ENCODE measurements at regions of chr19 and their contacts with region 1.

Region 1: GRCh38 chr19:15432629-15433518 is 14.1 kb upstream of the AKAP8L start:
- DNase-seq: peak; percentile 93
- ATAC-seq: peak; percentile 93
- H3K4me3 ChIP-seq: peak overlapping the region; percentile 71 to 93 (median 87)
- H3K4me3 Mint-ChIP-seq: peak overlapping the region; percentile 99
- H3K27ac ChIP-seq: peak overlapping the region; percentile 52 to 70
- H3K27ac Mint-ChIP-seq: peak overlapping the region; percentile 95
- H3K4me1 ChIP-seq: peaks cover 24 to 32% of the 10 kb centered on the region in 2 donors
- H3K4me1 Mint-ChIP-seq: peaks cover 27% of the 10 kb centered on the region
- H3K27me3 ChIP-seq: no peaks in the 10 kb centered on the region
- H3K27me3 Mint-ChIP-seq: no peaks in the 10 kb centered on the region
- CTCF ChIP-seq: no peak

Region 2: DNA sequence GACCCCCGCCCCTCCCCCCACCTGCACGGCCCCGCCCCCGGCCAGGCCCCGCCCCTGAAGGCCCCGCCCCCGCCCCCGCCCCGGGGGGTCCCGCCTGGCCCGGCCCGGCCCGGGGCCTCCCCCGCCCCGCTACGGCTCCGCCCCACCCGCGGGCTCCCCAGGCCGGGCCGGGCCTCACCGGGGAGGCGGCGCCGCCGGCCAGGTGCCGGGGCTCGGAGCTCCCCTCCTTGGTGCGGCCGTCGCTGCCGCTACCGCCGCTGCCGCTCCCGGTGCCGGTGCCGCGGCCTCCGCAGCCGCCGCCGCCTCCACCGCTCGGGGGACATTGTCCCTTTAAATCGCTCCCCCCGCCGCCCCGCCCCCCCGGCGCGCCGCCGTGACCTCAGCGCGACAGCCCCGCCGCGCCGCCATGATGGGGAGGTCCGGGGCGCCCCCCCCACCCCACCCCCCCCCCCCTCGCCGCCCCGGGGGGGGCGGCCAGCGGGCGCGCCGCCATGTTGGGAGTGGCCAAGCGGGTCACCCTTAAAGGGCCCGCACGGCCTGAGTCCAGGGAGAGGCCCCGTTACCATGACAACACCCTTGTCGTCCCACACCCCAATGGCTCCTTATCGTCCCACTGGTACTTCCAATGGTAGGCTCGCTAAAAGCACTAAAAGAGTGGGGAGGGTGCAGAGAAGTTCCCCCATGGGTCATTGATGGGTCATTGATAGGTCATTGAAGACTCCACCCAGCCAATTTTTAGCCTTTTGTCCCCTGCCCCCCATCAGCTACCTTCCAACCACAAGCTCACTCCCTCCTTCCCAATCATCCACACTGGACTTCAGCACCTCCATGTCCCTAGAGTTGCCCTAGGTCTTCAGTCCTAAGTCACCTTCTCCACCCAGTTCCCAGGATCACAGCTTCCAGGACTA is 17.0 kb after region 1 on chr19 and contains the start of gene WIZ:
- CTCF ChIA-PET with region 1: interaction called, 3 read pairs
- POLR2A ChIA-PET with region 1: no interaction called
- intact Hi-C with region 1: loop called (anchors 1 kb)
- DNase-seq: peak; percentile 91
- ATAC-seq: peak; percentile 78
- H3K4me3 ChIP-seq: peak within 1 kb of the TSS in 4 of 5 experiments; percentile 51 to 69 (median 58)
- H3K4me3 Mint-ChIP-seq: peak within 1 kb of the TSS; percentile 85
- H3K27ac ChIP-seq: peak within 1 kb of the TSS; percentile 73 to 81
- H3K27ac Mint-ChIP-seq: peak within 1 kb of the TSS; percentile 92
- H3K4me1 ChIP-seq: peaks cover 8 to 17% of the 10 kb centered on the region in 2 donors
- H3K4me1 Mint-ChIP-seq: peaks cover 12% of the 10 kb centered on the region
- H3K27me3 ChIP-seq: no peaks in the 10 kb centered on the region
- H3K27me3 Mint-ChIP-seq: no peaks in the 10 kb centered on the region
- CTCF ChIP-seq: no peak
- total RNA-seq, gene WIZ: 24.8 and 28.9 TPM in 2 replicates

Region 3: GRCh38 chr19:15466851-15467733 is 34.2 kb after region 1 on chr19:
- CTCF ChIA-PET with region 1: interaction called, 6 read pairs
- POLR2A ChIA-PET with region 1: interaction called, 4 read pairs
- intact Hi-C with region 1: loop called (anchors 2 kb)
- DNase-seq: no peak
- ATAC-seq: no peak
- H3K4me3 ChIP-seq: no peak overlapping the region
- H3K4me3 Mint-ChIP-seq: peak overlapping the region; percentile 47
- H3K27ac ChIP-seq: no peak overlapping the region
- H3K27ac Mint-ChIP-seq: peak overlapping the region; percentile 68
- H3K4me1 ChIP-seq: peaks cover 41 to 53% of the 10 kb centered on the region in 2 donors
- H3K4me1 Mint-ChIP-seq: peaks cover 48% of the 10 kb centered on the region
- H3K27me3 ChIP-seq: peaks cover 0 to 24% (median 8%) of the 10 kb centered on the region in 4 experiments
- H3K27me3 Mint-ChIP-seq: peaks cover 19% of the 10 kb centered on the region
- CTCF ChIP-seq: no peak

Region 4: DNA sequence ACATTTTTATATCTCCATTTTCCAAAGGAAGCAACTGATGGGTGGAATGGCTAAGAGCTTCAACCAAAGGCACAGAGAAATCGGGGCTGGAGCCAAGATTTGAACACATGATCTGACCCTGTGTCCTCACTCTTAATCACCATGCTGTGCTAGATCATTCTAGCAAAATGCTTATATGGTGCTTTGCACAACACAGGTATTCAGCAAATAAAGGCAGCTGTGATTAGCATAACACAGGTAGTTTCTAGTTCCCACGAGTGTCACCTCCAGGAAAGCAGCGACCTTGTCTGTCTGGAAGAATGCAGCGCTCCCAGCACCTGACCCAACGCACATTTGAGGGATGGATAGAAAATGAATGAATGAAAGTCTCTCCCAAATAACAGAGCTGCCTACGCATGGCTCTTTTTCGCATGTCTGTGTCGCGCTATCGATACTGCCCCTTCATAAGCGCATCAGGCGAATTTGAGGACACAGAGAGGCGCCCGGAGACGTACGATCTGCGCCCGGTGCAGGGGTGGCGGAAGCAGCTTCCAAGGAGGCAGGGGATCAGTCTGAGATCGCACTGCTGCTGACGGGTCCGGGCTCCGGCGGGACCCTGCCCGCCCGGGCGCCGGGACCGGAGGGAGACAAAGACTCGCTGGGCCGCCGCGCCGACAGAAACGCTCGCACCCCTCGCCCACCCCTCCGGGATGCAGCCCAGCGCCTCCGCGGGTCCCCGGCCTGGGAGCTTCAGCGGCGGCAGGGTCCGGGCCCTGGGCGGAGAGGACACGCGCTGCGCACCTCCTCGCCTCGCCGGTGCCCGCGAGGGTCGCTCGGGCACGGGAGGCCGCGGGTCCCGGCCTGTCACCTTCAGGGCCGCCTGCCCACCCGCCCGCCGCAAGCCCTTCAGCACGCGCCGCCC is 1038.3 kb after region 1 on chr19:
- CTCF ChIA-PET with region 1: no interaction called
- POLR2A ChIA-PET with region 1: no interaction called
- intact Hi-C with region 1: no loop called
- DNase-seq: no peak
- ATAC-seq: peak; percentile 1
- H3K4me3 ChIP-seq: peak overlapping the region; percentile 57 to 92 (median 73)
- H3K4me3 Mint-ChIP-seq: peak overlapping the region; percentile 95
- H3K27ac ChIP-seq: peak overlapping the region in 1 of 2 donors; percentile 55
- H3K27ac Mint-ChIP-seq: peak overlapping the region; percentile 66
- H3K4me1 ChIP-seq: peaks cover 13 to 35% of the 10 kb centered on the region in 2 donors
- H3K4me1 Mint-ChIP-seq: peaks cover 40% of the 10 kb centered on the region
- H3K27me3 ChIP-seq: no peaks in the 10 kb centered on the region
- H3K27me3 Mint-ChIP-seq: no peaks in the 10 kb centered on the region
- CTCF ChIP-seq: no peak

Measured in B cell (primary cell).